HCT116 (cell line): ENCODE measurements at regions of chr3 and their contacts with region 1.

Region 1: GRCh38 chr3:71859123-71859519 is 74.2 kb upstream of the PROK2 start:
- DNase-seq: peak; percentile 27
- ATAC-seq: peak; percentile 82
- H3K4me3 ChIP-seq: no peak overlapping the region
- H3K27ac ChIP-seq: no peak overlapping the region
- H3K4me1 ChIP-seq: no peaks in the 10 kb centered on the region
- H3K27me3 ChIP-seq: peaks cover 21% of the 10 kb centered on the region
- CTCF ChIP-seq: peak; percentile 54 to 65 (median 60); a peak in 5 of 6 replicates
- POLR2A ChIP-seq: no peak
- RAD21 ChIP-seq: peak; percentile 77

Region 2: GRCh38 chr3:70064194-70064779 is 1794.8 kb before region 1 on chr3:
- CTCF ChIA-PET with region 1: no interaction called
- POLR2A ChIA-PET with region 1: no interaction called
- RAD21 ChIA-PET with region 1: no interaction called
- intact Hi-C with region 1: loop called (anchors 10 kb)
- DNase-seq: peak; percentile 4
- ATAC-seq: no peak
- H3K4me3 ChIP-seq: no peak overlapping the region
- H3K27ac ChIP-seq: no peak overlapping the region
- H3K4me1 ChIP-seq: no peaks in the 10 kb centered on the region
- H3K27me3 ChIP-seq: no peaks in the 10 kb centered on the region; the same call in 1 of the 2 replicates
- CTCF ChIP-seq: peak; percentile 11 to 64 (median 34); a peak in 4 of 6 replicates
- POLR2A ChIP-seq: no peak
- RAD21 ChIP-seq: peak; percentile 49; the same call in 1 of the 2 replicates

Region 3: DNA sequence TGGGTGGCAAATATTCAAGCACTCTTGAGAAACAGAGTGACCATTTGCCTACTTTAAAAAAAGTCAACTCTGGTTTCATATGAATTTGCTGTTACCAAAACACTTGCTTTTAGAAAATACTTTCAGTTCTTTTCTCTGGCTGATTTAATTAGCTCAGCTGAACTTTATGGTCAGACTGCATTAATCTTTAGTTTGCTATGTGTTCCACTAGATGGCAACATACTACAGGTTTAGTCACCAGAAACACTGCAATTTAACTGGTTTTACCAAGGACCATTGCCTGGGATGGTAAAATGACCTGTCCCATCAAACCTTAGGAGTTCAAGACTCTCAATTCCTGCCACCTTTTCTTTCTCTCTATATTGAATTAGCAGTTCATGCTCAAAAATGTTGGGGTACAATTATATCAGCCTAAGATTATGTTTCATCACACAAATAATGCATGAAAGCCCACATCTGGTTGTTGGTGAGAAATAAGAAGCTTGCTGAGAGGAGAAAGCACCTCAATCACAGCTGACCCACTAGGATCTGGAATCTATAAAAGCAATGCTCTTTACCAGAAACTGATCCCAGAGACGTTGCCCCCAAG is 148.1 kb before region 1 on chr3:
- CTCF ChIA-PET with region 1: interaction called, 13 read pairs
- POLR2A ChIA-PET with region 1: no interaction called
- RAD21 ChIA-PET with region 1: interaction called in 1 of 2 experiments, 9 read pairs
- intact Hi-C with region 1: loop called (anchors 1 kb)
- DNase-seq: peak; percentile 21
- ATAC-seq: peak; percentile 80
- H3K4me3 ChIP-seq: no peak overlapping the region
- H3K27ac ChIP-seq: no peak overlapping the region
- H3K4me1 ChIP-seq: no peaks in the 10 kb centered on the region
- H3K27me3 ChIP-seq: no peaks in the 10 kb centered on the region
- CTCF ChIP-seq: peak; percentile 47 to 70 (median 48); a peak in 5 of 6 replicates
- POLR2A ChIP-seq: no peak
- RAD21 ChIP-seq: peak; percentile 78

Region 4: GRCh38 chr3:71725279-71725991 is 133.7 kb before region 1 on chr3 and contains the start of gene EIF4E3:
- CTCF ChIA-PET with region 1: interaction called, 18 read pairs
- POLR2A ChIA-PET with region 1: no interaction called
- RAD21 ChIA-PET with region 1: interaction called in 1 of 2 experiments, 3 read pairs
- intact Hi-C with region 1: loop called (anchors 5 kb)
- DNase-seq: no peak
- ATAC-seq: peak; percentile 65
- H3K4me3 ChIP-seq: peak within 1 kb of the TSS; percentile 63 to 70
- H3K27ac ChIP-seq: peak within 1 kb of the TSS; percentile 42; the same call in 1 of the 2 replicates
- H3K4me1 ChIP-seq: peaks cover 7 to 21% of the 10 kb centered on the region in 2 experiments; a peak in 3 of 4 replicates
- H3K27me3 ChIP-seq: peaks cover 19% of the 10 kb centered on the region
- CTCF ChIP-seq: no peak
- POLR2A ChIP-seq: no peak
- RAD21 ChIP-seq: no peak
- total RNA-seq, gene EIF4E3: 6.0 TPM

Region 5: DNA sequence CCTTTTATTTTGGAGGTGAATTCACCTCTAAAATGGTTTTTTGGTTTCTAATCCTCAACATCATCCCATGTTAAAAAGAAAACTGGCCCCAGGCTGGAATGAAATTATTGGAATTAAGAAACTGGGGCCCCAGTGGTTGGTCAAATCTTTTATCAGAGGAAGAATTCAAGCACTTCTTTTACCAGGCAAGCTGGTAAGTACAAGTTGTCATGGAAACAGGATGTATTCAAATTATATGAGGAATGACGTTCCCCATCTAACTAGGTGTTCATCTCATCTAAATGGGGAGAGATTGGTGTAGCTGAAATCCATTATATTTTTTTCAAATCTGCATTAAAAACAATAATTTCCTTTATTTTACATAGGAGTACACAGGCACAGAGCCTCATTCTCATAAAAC is 124.2 kb before region 1 on chr3:
- CTCF ChIA-PET with region 1: interaction called, 18 read pairs
- POLR2A ChIA-PET with region 1: no interaction called
- RAD21 ChIA-PET with region 1: interaction called in 1 of 2 experiments, 3 read pairs
- intact Hi-C with region 1: loop called (anchors 5 kb)
- DNase-seq: no peak
- ATAC-seq: no peak
- H3K4me3 ChIP-seq: no peak overlapping the region
- H3K27ac ChIP-seq: no peak overlapping the region
- H3K4me1 ChIP-seq: peaks cover 0 to 4% of the 10 kb centered on the region in 2 experiments; a peak in 3 of 4 replicates
- H3K27me3 ChIP-seq: no peaks in the 10 kb centered on the region; the same call in 1 of the 2 replicates
- CTCF ChIP-seq: no peak
- POLR2A ChIP-seq: no peak
- RAD21 ChIP-seq: no peak